Posterior vena cava (tissue), 2 donors: ENCODE measurements at regions of chr16 and their contacts with region 1.

Region 1: DNA sequence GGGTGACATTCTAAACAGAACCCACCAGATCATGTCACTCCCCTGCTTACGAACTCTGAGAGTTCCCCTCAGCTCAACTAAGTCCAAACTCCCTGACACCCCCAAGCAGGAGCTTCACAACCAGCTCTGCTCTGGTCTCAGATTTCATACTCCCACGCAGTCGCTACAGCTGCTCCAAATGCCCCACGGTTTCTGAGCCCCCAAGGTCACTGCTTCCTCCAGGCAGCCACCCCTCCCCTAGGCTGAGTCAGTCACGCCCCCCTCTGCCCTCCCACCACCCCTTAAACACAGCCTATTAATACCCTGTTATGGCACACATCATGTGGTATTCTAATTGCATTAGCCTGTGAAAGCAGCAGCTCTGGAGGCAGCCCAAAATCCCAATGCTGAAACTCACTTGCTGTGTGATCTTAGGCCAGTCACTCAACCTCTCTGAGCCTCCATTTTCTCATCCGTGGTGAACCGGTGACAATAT is 51.5 kb downstream of the GSG1L start:
- DNase-seq: peak; percentile 12

Region 2: DNA sequence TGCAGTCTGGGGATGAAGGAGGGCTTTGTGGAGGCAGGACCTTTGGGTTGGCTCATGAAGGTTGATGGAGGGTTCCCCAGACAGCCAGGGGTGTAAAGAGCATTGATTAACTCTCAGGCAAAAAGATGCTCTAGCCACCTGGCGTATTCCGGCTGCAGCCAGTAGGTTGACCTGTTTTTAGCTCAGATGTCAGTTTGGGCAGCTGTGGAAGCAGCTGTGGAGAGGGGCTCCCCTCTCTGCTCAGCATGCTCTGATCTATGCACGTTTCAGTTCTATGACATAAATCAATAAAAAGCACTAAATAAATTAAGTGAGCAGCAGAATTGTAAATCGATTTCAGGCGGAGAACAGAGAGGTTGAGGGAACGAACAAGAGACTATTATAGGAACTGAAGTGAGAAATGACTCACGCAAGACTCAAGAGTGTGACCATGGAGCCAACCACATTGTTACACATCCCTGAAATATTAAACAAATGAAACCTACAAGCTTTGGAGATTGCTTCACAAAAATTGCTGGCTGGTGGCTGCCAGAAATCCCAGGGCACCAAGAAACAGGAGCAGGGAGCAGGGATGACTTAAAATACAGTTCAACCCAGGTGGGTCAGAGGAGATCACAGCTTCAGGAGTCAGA is 60.4 kb before region 1 on chr16:
- intact Hi-C with region 1: loop called in 1 of 2 experiments (anchors 10 kb)
- DNase-seq: peak; percentile 19